ENCODE measurements at regions of chr18 and their contacts with region 1.

Region 1: GRCh38 chr18:36284671-36285295 is 12.7 kb upstream of the FHOD3 start:
- DNase-seq: peak; percentile 55
- H3K4me3 ChIP-seq: no peak overlapping the region; a peak in 1 of 4 replicates
- H3K27ac ChIP-seq: no peak overlapping the region
- H3K4me1 ChIP-seq: peaks cover 0 to 6% of the 10 kb centered on the region in 2 experiments; a peak in 1 of 4 replicates
- H3K27me3 ChIP-seq: no peaks in the 10 kb centered on the region
- CTCF ChIP-seq: peak; percentile 92
- EP300 ChIP-seq: no peak
- RAD21 ChIP-seq: peak; percentile 99

Region 2: DNA sequence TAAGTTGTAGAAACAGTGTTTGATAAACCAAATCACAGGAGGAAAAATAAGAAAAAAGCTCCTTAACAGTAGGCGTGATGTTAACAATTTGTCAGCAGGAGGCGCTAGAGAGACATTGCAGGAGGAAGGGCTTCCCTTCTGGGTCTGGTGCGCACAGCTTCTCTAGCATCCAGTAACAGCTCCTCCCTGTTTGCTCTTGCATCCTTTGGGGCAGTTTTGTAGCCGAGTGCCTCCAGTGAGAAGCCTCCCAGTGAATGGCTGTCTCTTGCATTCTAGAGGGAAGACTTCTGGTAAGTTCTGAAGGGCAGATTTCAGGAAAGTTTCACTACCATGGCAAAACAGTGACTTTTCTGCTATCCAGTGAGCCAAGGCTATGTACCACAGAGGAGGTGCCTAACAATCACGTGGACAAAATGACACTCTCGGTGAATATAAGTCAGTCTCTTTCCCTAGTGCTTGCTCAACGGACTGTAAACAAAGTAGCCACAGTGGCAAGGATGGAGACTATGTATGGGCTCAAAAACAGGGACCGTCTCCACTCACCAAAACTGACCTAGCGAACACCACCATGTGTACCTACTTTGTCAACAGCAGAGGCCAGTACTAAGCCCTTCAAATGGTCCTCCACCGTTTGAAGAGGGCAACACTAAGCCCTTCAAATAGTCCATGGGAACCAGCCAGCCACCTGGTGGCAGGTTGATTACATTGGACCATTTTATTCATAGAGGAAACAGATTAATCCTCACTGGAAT is 898.0 kb before region 1 on chr18:
- CTCF ChIA-PET with region 1: interaction called, 11 read pairs
- POLR2A ChIA-PET with region 1: no interaction called
- DNase-seq: peak; percentile 68
- H3K4me3 ChIP-seq: no peak overlapping the region; a peak in 1 of 4 replicates
- H3K27ac ChIP-seq: no peak overlapping the region
- H3K4me1 ChIP-seq: peaks cover 0 to 4% of the 10 kb centered on the region in 2 experiments; a peak in 1 of 4 replicates
- H3K27me3 ChIP-seq: no peaks in the 10 kb centered on the region
- CTCF ChIP-seq: peak; percentile 88
- EP300 ChIP-seq: no peak
- RAD21 ChIP-seq: peak; percentile 76

Region 3: GRCh38 chr18:36015629-36016028 is 269.2 kb before region 1 on chr18:
- CTCF ChIA-PET with region 1: interaction called, 91 read pairs
- POLR2A ChIA-PET with region 1: interaction called, 6 read pairs
- DNase-seq: no peak
- H3K4me3 ChIP-seq: no peak overlapping the region
- H3K27ac ChIP-seq: no peak overlapping the region
- H3K4me1 ChIP-seq: peaks cover 0 to 11% of the 10 kb centered on the region in 2 experiments; a peak in 2 of 4 replicates
- H3K27me3 ChIP-seq: no peaks in the 10 kb centered on the region
- CTCF ChIP-seq: no peak
- EP300 ChIP-seq: no peak
- RAD21 ChIP-seq: no peak

Region 4: GRCh38 chr18:36095936-36096519 is 188.8 kb before region 1 on chr18:
- CTCF ChIA-PET with region 1: interaction called, 136 read pairs
- POLR2A ChIA-PET with region 1: no interaction called
- DNase-seq: peak; percentile 53
- H3K4me3 ChIP-seq: no peak overlapping the region; a peak in 1 of 4 replicates
- H3K27ac ChIP-seq: no peak overlapping the region
- H3K4me1 ChIP-seq: no peaks in the 10 kb centered on the region
- H3K27me3 ChIP-seq: no peaks in the 10 kb centered on the region
- CTCF ChIP-seq: peak; percentile 72
- EP300 ChIP-seq: no peak
- RAD21 ChIP-seq: peak; percentile 89

Region 5: DNA sequence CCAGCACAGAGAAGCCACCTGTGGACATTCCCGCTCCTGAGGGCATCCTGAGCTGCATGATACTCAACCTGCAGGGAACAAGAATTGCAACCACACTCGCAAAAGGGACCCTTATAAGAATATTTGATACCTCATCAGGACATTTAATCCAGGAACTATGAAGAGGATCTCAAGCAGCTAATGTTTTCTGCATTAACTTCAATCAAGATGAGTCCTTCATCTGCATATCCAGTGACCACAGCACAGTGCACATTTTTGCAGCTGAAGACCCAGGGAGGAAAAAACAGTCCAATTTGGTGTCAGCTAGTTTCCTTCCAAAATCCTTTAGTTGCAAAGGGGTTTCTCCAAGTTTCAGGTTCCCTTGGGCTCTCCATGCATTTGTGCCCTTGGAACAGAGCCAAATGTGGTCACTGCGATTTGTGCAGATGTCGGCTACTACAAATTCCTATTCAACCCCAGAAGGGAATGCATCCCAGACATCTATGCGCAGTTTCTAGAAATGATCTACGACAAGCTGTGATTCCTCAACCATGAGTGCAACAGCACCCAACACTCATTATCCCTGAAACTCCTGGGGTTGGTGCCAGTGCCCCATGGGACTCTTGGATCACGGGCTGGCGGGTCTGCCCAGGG is 10.6 kb before region 1 on chr18:
- CTCF ChIA-PET with region 1: interaction called, 12 read pairs
- POLR2A ChIA-PET with region 1: no interaction called
- DNase-seq: no peak
- H3K4me3 ChIP-seq: no peak overlapping the region
- H3K27ac ChIP-seq: no peak overlapping the region
- H3K4me1 ChIP-seq: no peaks in the 10 kb centered on the region; a peak in 1 of 4 replicates
- H3K27me3 ChIP-seq: no peaks in the 10 kb centered on the region
- CTCF ChIP-seq: no peak
- EP300 ChIP-seq: no peak
- RAD21 ChIP-seq: no peak

Region 6: DNA sequence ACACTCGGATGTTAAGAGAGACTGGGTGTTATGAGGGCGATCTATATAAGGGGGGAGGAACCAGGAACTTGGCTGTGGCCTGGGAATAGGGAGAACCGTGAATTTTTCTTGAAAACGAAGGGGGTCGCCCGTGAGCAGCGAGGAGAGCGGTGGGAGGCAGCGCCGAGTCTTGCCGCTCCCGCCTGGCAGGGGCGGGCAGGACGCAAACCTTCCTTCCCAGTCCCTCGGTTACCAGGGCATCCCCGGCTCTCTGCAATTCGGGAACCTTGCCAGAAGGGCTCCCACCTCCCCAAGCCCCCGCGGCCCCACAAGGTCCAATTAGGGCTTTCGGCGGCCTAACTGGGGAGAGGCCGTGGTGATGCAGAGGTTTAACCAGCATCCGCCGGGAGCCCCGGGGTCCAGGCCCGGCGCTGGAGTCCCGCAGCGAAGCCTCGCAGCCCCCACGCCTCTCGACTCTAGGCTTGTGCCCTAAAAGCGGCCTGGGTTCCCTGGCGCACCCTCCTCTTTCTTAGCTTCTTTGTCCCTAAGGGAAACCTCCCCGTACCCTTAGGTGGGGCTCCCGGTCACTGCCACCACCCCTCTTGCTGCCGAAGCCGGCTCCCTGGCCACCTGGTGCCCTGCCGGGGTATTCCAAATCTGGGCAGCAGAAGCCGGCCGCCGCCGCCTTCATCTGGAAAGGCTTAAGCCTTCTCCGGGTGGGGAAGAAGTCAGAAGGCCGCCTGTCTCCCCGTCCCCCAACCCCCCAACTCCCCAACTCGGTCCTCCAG is 12.1 kb after region 1 on chr18:
- CTCF ChIA-PET with region 1: interaction called, 14 read pairs
- POLR2A ChIA-PET with region 1: no interaction called
- DNase-seq: peak; percentile 86
- H3K4me3 ChIP-seq: peak overlapping the region; percentile 63 to 79
- H3K27ac ChIP-seq: peak overlapping the region; percentile 57 to 89
- H3K4me1 ChIP-seq: peaks cover 0 to 10% of the 10 kb centered on the region in 2 experiments; a peak in 2 of 4 replicates
- H3K27me3 ChIP-seq: peaks cover 6% of the 10 kb centered on the region; the same call in 1 of the 2 replicates
- CTCF ChIP-seq: peak; percentile 64
- EP300 ChIP-seq: no peak
- RAD21 ChIP-seq: peak; percentile 82

Region 7: GRCh38 chr18:36543991-36544725 is 259.4 kb after region 1 on chr18:
- CTCF ChIA-PET with region 1: no interaction called
- POLR2A ChIA-PET with region 1: no interaction called
- DNase-seq: no peak
- H3K4me3 ChIP-seq: no peak overlapping the region
- H3K27ac ChIP-seq: no peak overlapping the region
- H3K4me1 ChIP-seq: no peaks in the 10 kb centered on the region
- H3K27me3 ChIP-seq: no peaks in the 10 kb centered on the region
- CTCF ChIP-seq: no peak
- EP300 ChIP-seq: no peak
- RAD21 ChIP-seq: no peak

Measured in SK-N-SH (cell line).